ENCODE measurements at regions of chr5 and their contacts with region 1.

Region 1: GRCh38 chr5:58548068-58548467 is 34.8 kb upstream of the RAB3C start:
- DNase-seq: no peak
- ATAC-seq: no peak
- H3K4me3 ChIP-seq: no peak overlapping the region
- H3K4me3 Mint-ChIP-seq: no peak overlapping the region
- H3K27ac ChIP-seq: no peak overlapping the region
- H3K27ac Mint-ChIP-seq: no peak overlapping the region
- H3K4me1 ChIP-seq: no peaks in the 10 kb centered on the region
- H3K4me1 Mint-ChIP-seq: no peaks in the 10 kb centered on the region
- H3K27me3 ChIP-seq: no peaks in the 10 kb centered on the region
- H3K27me3 Mint-ChIP-seq: no peaks in the 10 kb centered on the region
- CTCF ChIP-seq: no peak

Region 2: DNA sequence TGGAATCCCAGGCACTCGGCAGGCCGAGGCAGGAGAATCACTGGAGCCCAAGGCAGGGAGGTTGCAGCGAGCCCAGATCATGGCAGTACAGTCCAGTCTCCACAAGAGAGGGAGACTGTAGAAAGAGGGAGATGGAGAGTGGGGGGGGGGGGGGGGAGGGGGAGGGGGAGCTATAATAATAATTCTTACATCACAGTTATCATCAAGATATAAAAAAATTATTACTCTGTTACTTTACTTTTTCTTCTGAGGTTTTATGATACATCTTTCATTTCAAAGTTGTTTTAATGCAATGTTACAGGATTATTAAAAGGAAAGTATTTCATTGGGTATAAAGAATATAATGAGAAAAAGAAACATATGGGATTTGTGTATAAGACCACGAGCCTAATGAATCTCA is 17.0 kb after region 1 on chr5:
- CTCF ChIA-PET with region 1: no interaction called
- POLR2A ChIA-PET with region 1: no interaction called
- intact Hi-C with region 1: no loop called
- DNase-seq: no peak
- ATAC-seq: no peak
- H3K4me3 ChIP-seq: no peak overlapping the region
- H3K4me3 Mint-ChIP-seq: no peak overlapping the region
- H3K27ac ChIP-seq: no peak overlapping the region
- H3K27ac Mint-ChIP-seq: no peak overlapping the region
- H3K4me1 ChIP-seq: no peaks in the 10 kb centered on the region
- H3K4me1 Mint-ChIP-seq: no peaks in the 10 kb centered on the region
- H3K27me3 ChIP-seq: no peaks in the 10 kb centered on the region
- H3K27me3 Mint-ChIP-seq: no peaks in the 10 kb centered on the region
- CTCF ChIP-seq: no peak

Region 3: DNA sequence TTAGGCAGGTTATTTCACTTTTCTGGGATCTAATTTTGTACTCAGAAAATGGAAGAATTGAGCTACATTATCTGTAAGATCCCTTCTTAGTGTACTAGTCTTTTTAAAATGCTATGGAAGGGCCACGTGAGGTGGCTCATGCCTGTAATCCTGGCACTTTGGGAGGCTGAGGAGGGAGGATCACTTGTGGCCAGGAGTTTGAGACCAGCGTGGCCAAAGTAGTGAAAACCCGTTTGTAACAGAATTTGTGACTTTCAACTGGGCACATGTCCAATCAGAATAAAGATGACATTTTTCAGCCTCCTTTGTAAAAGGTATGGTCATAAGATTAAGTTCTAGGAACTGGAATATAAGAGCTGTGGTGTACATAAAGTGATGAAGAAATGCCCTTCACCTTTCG is 31.7 kb after region 1 on chr5:
- CTCF ChIA-PET with region 1: no interaction called
- POLR2A ChIA-PET with region 1: no interaction called
- intact Hi-C with region 1: loop called in 1 of 2 experiments (anchors 1 kb)
- DNase-seq: no peak
- ATAC-seq: no peak
- H3K4me3 ChIP-seq: no peak overlapping the region
- H3K4me3 Mint-ChIP-seq: no peak overlapping the region
- H3K27ac ChIP-seq: no peak overlapping the region
- H3K27ac Mint-ChIP-seq: no peak overlapping the region
- H3K4me1 ChIP-seq: peaks cover 9% of the 10 kb centered on the region
- H3K4me1 Mint-ChIP-seq: peaks cover 21% of the 10 kb centered on the region
- H3K27me3 ChIP-seq: peaks cover 4 to 19% of the 10 kb centered on the region in 2 experiments
- H3K27me3 Mint-ChIP-seq: peaks cover 38% of the 10 kb centered on the region
- CTCF ChIP-seq: no peak

Measured in CD8-positive, alpha-beta T cell (primary cell).